AG04450 (cell line): ENCODE measurements at regions of chr1 and their contacts with region 1.

Region 1: GRCh38 chr1:52364235-52364839 is 1.7 kb downstream of the CC2D1B start:
- DNase-seq: no peak
- H3K4me3 ChIP-seq: peak overlapping the region; percentile 90
- H3K27ac ChIP-seq: peak overlapping the region; percentile 80
- H3K27me3 ChIP-seq: no peaks in the 10 kb centered on the region
- CTCF ChIP-seq: no peak

Region 2: GRCh38 chr1:52072291-52072690 is 292.0 kb before region 1 on chr1:
- CTCF ChIA-PET with region 1: interaction called, 12 read pairs
- POLR2A ChIA-PET with region 1: no interaction called
- DNase-seq: no peak
- H3K4me3 ChIP-seq: no peak overlapping the region
- H3K27ac ChIP-seq: no peak overlapping the region
- H3K27me3 ChIP-seq: no peaks in the 10 kb centered on the region
- CTCF ChIP-seq: no peak